GM12878 (cell line): ENCODE measurements at regions of chr17 and their contacts with region 1.

Region 1: DNA sequence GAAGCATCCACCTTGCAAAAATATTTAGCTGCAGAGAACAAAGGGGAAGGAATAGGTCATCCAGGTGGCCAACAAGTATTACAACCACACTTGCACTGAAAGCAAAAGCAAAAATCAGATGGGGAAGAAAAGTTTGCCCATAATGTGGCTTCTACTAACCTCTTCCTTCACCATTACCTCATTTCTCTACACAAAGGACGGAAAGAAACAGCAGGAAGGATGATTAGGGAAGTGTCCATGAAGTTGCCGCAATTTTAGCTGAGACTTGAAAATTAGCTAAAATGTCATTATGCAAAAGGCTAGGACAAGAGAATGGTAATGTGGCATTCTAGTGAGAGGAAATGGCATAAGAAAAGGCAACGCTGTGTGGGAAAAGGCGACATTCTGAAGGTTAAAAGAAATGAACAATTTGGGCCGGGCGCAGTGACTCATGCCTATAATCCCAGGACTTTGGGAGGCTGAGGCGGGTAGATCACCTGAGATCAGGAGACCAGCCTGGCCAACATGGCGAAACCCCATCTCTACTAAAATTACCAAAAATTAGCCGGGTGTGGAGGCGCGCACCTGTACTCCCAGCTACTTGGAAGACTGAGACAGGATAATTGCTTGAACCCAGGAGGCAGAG is 13.7 kb downstream of the KANSL1 start:
- DNase-seq: peak; percentile 73
- ATAC-seq: peak; percentile 79
- H3K4me3 ChIP-seq: peak overlapping the region; percentile 17; the same call in 1 of the 2 replicates
- H3K27ac ChIP-seq: peak overlapping the region; percentile 29
- H3K4me1 ChIP-seq: peaks cover 50% of the 10 kb centered on the region
- H3K27me3 ChIP-seq: no peaks in the 10 kb centered on the region
- CTCF ChIP-seq: no peak
- EP300 ChIP-seq: peak in 1 of 2 experiments; percentile 45; a peak in 1 of 4 replicates
- POLR2A ChIP-seq: no peak
- RAD21 ChIP-seq: no peak

Region 2: GRCh38 chr17:45812102-45812501 is 367.4 kb before region 1 on chr17:
- CTCF ChIA-PET with region 1: no interaction called
- POLR2A ChIA-PET with region 1: no interaction called
- RAD21 ChIA-PET with region 1: no interaction called
- SMC1A ChIA-PET with region 1: no interaction called
- in situ Hi-C with region 1: no loop called
- intact Hi-C with region 1: no loop called
- DNase-seq: no peak
- ATAC-seq: no peak
- H3K4me3 ChIP-seq: no peak overlapping the region
- H3K27ac ChIP-seq: no peak overlapping the region
- H3K4me1 ChIP-seq: no peaks in the 10 kb centered on the region
- H3K27me3 ChIP-seq: no peaks in the 10 kb centered on the region
- CTCF ChIP-seq: 0 out of 6 replicates have a peak, but pooled peaks of 1 of the 3 experiments have one; percentile 1
- EP300 ChIP-seq: no peak
- POLR2A ChIP-seq: no peak
- RAD21 ChIP-seq: no peak

Region 3: DNA sequence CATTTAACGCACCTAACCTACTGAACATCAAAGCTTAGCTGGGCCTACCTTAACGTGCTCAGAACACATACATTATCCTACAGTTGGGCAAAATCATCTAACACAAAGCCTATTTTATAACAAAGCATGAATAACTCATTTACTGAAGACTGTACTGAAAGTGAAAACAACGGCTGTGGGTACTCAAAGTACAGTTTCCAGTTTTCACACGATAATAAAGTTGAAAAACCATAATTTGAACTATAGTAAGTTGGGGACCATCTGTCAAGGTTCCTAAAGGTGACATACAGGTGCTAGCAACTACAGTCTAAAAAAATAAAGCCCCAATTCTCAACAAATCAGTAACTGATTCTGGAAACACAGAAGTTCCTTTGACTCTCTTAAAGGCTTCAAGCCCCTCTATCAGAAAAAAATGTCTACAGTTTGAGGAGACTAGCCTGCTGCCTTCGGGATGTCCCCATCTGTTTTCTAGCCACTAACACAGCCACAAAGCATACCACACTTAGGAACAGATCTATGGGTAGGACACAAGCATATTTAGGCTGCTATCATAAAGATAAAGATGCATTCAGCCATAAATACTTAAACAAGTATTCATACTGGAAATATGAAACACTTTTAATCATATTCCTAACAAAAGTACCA is 57.5 kb before region 1 on chr17:
- CTCF ChIA-PET with region 1: interaction called, 10 read pairs
- POLR2A ChIA-PET with region 1: interaction called, 5 read pairs
- RAD21 ChIA-PET with region 1: interaction called, 6 read pairs
- SMC1A ChIA-PET with region 1: interaction called, 93 read pairs
- in situ Hi-C with region 1: no loop called
- intact Hi-C with region 1: no loop called
- DNase-seq: peak; percentile 65
- ATAC-seq: peak; percentile 81
- H3K4me3 ChIP-seq: peak overlapping the region; percentile 33
- H3K27ac ChIP-seq: peak overlapping the region; percentile 62
- H3K4me1 ChIP-seq: peaks cover 59% of the 10 kb centered on the region
- H3K27me3 ChIP-seq: no peaks in the 10 kb centered on the region
- CTCF ChIP-seq: no peak
- EP300 ChIP-seq: peak; percentile 33 to 59; a peak in 3 of 4 replicates
- POLR2A ChIP-seq: no peak
- RAD21 ChIP-seq: no peak

Region 4: DNA sequence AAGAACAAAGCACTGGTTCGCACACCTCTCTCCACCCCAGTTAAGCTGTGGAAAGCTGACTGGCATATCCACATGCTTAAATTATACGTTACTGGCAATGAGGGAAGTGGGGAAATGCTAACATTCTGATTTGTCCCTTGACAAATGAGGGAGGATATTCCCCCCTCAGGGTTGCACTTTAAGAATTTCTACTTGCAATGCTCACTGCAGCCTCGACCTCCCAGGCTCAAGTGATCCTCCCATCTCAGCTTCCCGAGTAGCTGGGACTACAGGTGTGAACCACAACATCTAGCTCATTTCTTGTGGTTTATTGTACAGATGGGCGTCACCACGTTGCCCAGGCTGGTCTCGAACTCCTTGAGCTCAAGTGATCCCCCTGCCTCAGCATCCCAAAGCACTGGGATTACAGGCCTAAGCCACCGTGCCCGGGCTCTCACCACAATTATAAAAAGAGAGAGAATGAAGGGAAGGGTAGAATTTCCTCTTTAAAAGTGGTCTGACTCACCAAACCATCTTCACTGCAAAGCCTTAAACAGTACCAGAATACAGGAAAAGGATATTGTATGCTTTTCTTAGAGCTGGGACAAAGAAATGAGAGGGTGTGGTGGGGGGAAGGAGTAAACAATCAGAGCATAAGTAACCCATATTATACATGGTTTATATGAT is 25.2 kb before region 1 on chr17:
- CTCF ChIA-PET with region 1: interaction called, 34 read pairs
- POLR2A ChIA-PET with region 1: interaction called, 17 read pairs
- RAD21 ChIA-PET with region 1: interaction called, 102 read pairs
- SMC1A ChIA-PET with region 1: interaction called, 478 read pairs
- in situ Hi-C with region 1: no loop called
- intact Hi-C with region 1: no loop called
- DNase-seq: no peak
- ATAC-seq: no peak
- H3K4me3 ChIP-seq: no peak overlapping the region
- H3K27ac ChIP-seq: peak overlapping the region; percentile 29
- H3K4me1 ChIP-seq: peaks cover 90% of the 10 kb centered on the region
- H3K27me3 ChIP-seq: no peaks in the 10 kb centered on the region
- CTCF ChIP-seq: no peak
- EP300 ChIP-seq: no peak
- POLR2A ChIP-seq: no peak
- RAD21 ChIP-seq: no peak

Region 5: DNA sequence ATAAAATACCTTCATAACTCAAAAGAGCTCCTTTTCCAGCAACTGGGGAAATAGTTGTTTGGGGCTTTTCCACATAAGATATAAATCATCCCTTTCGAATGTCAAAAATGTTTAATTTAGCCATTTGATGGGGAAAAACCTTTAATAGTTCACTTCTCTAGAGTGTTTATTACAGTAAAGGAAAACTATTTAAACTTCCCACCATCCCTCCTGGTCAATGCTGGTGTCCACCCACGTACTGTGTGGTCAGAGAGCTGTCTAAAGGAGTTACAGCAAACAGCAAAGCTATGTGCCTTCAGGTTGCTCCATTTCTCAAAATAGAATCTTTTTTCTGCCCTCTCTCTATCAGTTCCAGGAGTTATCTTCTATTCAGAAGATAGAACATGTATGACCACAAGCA is 19.8 kb before region 1 on chr17:
- CTCF ChIA-PET with region 1: interaction called, 34 read pairs
- POLR2A ChIA-PET with region 1: interaction called, 10 read pairs
- RAD21 ChIA-PET with region 1: interaction called, 102 read pairs
- SMC1A ChIA-PET with region 1: interaction called, 478 read pairs
- in situ Hi-C with region 1: no loop called
- intact Hi-C with region 1: no loop called
- DNase-seq: no peak
- ATAC-seq: no peak
- H3K4me3 ChIP-seq: no peak overlapping the region
- H3K27ac ChIP-seq: no peak overlapping the region
- H3K4me1 ChIP-seq: peaks cover 59% of the 10 kb centered on the region
- H3K27me3 ChIP-seq: no peaks in the 10 kb centered on the region
- CTCF ChIP-seq: no peak
- EP300 ChIP-seq: no peak
- POLR2A ChIP-seq: no peak
- RAD21 ChIP-seq: no peak

Region 6: GRCh38 chr17:46167826-46168569 is 11.5 kb before region 1 on chr17:
- CTCF ChIA-PET with region 1: interaction called, 16 read pairs
- POLR2A ChIA-PET with region 1: interaction called, 10 read pairs
- RAD21 ChIA-PET with region 1: interaction called, 6 read pairs
- SMC1A ChIA-PET with region 1: interaction called, 478 read pairs
- in situ Hi-C with region 1: no loop called
- intact Hi-C with region 1: no loop called
- DNase-seq: no peak
- ATAC-seq: no peak
- H3K4me3 ChIP-seq: no peak overlapping the region
- H3K27ac ChIP-seq: no peak overlapping the region
- H3K4me1 ChIP-seq: no peaks in the 10 kb centered on the region
- H3K27me3 ChIP-seq: no peaks in the 10 kb centered on the region
- CTCF ChIP-seq: no peak
- EP300 ChIP-seq: no peak
- POLR2A ChIP-seq: no peak
- RAD21 ChIP-seq: no peak

Region 7: DNA sequence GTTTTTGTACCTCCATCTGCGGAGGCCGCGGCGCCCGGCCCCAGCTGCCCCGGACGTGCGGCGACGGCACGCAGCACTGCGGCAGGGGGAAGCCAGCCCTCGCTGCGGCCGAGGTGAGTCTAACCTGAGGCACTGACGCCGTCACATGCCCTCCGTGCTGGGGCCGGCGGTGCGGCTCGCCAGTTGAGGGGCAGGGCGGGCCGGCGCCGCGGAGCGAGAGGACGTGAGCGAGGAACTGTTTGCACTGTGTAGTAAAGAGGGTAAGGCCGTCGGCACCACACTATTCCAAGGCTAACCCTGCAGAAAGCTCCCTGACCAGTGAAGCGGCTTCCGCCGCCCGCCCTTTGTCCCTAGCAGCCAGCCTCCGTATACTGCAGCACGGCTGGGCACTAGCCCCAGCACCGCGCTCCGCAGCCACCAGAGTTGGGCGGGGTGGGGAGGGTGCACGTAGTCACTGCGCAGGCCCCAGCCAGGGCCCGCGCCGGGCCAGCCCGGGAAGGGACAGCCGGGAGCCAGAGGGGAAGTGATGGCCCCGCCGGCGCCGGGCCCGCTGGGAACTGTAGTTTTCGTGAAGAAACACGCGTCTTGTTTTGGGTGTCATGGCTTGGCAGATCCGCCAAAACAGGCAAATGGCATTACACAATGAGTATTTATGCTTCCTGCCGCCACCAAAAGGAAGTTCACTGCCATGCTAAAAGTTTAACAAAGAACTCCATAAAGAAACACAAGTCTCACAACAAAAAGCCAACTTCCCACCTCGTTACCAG is 14.3 kb after region 1 on chr17:
- CTCF ChIA-PET with region 1: interaction called, 34 read pairs
- POLR2A ChIA-PET with region 1: interaction called, 3 read pairs
- RAD21 ChIA-PET with region 1: interaction called, 16 read pairs
- SMC1A ChIA-PET with region 1: interaction called, 5 read pairs
- in situ Hi-C with region 1: no loop called
- intact Hi-C with region 1: no loop called
- DNase-seq: peak; percentile 88
- ATAC-seq: peak; percentile 90
- H3K4me3 ChIP-seq: peak overlapping the region; percentile 87
- H3K27ac ChIP-seq: peak overlapping the region; percentile 98
- H3K4me1 ChIP-seq: peaks cover 32% of the 10 kb centered on the region
- H3K27me3 ChIP-seq: no peaks in the 10 kb centered on the region
- CTCF ChIP-seq: peak in 2 of 3 experiments; percentile 13 to 26; a peak in 3 of 6 replicates
- EP300 ChIP-seq: peak in 1 of 2 experiments; percentile 7; a peak in 1 of 4 replicates
- POLR2A ChIP-seq: peak; percentile 85
- RAD21 ChIP-seq: no peak

Region 8: GRCh38 chr17:46199379-46199778 is 19.9 kb after region 1 on chr17:
- CTCF ChIA-PET with region 1: interaction called, 34 read pairs
- POLR2A ChIA-PET with region 1: no interaction called
- RAD21 ChIA-PET with region 1: interaction called, 3 read pairs
- SMC1A ChIA-PET with region 1: interaction called, 6 read pairs
- in situ Hi-C with region 1: no loop called
- intact Hi-C with region 1: no loop called
- DNase-seq: no peak
- ATAC-seq: no peak
- H3K4me3 ChIP-seq: no peak overlapping the region
- H3K27ac ChIP-seq: no peak overlapping the region
- H3K4me1 ChIP-seq: peaks cover 17% of the 10 kb centered on the region
- H3K27me3 ChIP-seq: no peaks in the 10 kb centered on the region
- CTCF ChIP-seq: no peak
- EP300 ChIP-seq: no peak
- POLR2A ChIP-seq: no peak
- RAD21 ChIP-seq: no peak